Left ventricle myocardium superior (tissue), 1 donor: ENCODE measurements at regions of chr15 and their contacts with region 1.

Region 1: GRCh38 chr15:73081321-73081958 is 29.2 kb downstream of the NEO1 start:
- DNase-seq: no peak
- ATAC-seq: peak; percentile 31

Region 2: DNA sequence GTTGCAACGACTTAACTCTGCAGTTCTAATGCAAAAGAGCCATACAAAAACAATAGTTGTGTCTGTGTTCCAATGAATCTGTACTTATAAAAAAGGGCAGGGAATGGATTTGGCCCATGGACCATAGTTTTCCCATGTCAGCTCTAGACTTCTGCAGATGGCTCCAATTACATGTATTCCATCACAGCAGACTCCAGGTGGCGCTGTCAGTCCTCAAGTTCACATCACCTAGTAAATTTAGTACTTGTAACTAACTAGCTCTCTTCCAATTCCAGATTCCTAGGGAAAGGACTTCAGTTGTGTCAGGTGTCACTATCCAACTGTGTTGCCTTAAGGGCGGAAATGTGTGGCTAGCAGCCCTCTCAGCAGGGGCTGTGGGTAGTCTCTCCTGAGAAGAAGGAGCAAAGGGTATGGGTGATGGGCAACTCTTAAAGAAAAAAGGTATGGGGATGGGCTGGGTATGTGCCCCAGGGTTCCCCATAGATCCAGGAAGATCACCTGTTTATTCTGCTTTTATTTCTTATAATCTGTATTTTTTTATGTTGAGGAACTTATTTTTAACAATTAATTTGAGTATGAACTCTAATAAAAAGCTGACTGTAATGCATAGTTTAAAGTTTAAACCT is 359.3 kb before region 1 on chr15:
- intact Hi-C with region 1: loop called (anchors 5 kb)
- DNase-seq: peak; percentile 55
- ATAC-seq: peak; percentile 26

Region 3: DNA sequence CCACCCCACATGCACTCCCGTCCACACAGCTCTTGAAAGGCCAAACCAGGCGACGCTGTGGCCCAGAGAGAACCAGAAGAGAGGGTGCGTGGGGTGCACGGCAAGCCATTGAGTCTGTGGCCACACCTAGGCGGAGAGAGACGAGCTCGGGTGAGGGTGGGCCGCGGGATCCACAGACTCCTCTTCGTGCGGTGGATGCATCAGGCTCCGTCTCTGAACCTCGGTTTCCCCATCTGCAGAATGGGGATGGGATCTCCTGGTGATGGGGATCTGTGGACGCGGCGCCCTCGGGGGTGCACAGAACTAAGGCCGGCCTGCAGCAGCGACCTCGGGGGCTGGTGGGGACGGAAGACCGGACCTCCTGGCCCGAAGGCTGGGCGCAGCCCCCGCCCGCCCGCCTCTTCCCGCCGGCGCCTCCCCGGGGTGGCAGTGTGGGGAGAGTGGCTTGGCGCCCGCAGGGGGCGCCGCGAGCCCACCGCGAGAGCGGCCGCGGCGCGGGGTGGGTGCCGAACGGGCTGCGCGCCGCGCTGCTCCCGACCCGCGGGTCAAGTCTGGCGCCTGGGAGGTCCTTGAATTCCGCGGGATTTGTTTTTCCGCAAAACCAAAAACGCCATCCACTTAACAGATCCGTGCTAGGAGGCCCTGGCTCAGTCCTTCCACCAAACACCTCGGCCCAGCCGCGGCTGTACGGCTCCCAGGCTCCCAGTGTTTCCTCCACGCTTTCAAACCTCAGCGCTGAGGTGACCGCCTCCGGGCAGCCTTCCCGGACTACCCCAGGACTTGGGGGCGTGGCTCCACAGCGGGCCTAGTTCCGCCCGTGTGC is 284.7 kb before region 1 on chr15:
- intact Hi-C with region 1: loop called (anchors 10 kb)
- DNase-seq: peak; percentile 61
- ATAC-seq: peak; percentile 98